Activated T-helper 2 cell treated with anti-CD3 and anti-CD28 coated beads, Interferon-gamma antibody, Interleukin-2, Interleukin-4, amounts not matched to agents 10 μg/mL and 5 μg/mL and 100 μg/mL, durations not matched to agents 14 hours and 24 hours and 36 hours (primary cell): ENCODE measurements at regions of chr19 and their contacts with region 1.

Region 1: DNA sequence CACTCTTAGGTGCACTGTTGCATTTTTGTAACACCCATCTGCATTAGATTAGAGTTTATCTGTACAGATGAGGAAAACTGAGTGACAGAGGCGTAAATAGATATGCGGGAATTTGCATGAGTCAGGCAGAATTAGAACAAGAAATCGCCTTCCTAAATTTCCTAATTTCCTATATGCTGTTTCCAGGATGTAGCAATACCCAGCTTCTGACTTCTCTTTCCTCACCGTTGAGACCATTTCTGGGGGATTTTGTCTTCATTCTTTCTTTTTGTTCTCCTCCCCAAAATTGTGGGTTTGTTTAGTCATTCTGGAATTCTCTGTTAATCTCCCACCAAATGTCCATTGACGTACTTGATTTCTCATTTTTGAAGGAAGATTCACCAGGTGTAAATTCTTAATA is 10.6 kb upstream of the ZNF792 start:
- DNase-seq: no peak
- H3K4me3 Mint-ChIP-seq: no peak overlapping the region
- H3K27ac Mint-ChIP-seq: no peak overlapping the region
- H3K4me1 Mint-ChIP-seq: peaks cover 16% of the 10 kb centered on the region
- H3K27me3 Mint-ChIP-seq: no peaks in the 10 kb centered on the region

Region 2: DNA sequence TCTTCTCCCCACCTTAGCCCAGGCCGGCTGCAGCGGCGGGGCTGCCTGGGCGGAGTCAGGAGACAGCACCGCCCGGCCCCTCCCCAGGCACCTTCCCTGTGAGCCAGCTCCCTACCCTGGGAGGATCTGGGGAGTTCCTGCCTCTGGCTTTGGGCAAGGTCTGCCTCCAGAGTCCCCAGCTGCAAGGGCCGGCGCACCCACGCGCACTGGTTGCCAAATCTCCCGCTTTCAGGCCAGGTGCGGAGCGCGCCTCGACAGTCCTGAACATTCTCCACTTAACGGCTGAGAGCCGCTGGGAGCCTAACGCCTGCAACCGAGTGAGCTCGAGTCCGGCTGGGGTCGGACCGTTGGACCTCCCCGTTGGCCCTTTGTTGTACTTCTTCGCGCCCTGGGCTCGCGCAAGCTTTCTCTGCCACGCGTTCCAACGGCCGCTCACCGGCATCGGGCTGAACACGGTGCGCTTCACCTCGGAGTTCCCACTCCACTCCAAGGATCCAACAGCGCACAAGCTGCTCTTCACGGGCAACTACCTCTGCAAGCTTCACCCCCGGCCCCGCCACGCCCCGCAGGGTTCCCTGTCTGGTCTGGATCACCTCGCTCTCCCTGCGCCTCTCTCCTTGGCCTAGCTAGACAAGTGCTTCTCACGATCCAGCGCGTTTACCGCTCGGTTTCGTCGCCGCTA is 69.7 kb before region 1 on chr19:
- intact Hi-C with region 1: no loop called
- DNase-seq: no peak
- H3K4me3 Mint-ChIP-seq: no peak overlapping the region
- H3K27ac Mint-ChIP-seq: no peak overlapping the region
- H3K4me1 Mint-ChIP-seq: no peaks in the 10 kb centered on the region
- H3K27me3 Mint-ChIP-seq: peaks cover 29% of the 10 kb centered on the region

Region 3: DNA sequence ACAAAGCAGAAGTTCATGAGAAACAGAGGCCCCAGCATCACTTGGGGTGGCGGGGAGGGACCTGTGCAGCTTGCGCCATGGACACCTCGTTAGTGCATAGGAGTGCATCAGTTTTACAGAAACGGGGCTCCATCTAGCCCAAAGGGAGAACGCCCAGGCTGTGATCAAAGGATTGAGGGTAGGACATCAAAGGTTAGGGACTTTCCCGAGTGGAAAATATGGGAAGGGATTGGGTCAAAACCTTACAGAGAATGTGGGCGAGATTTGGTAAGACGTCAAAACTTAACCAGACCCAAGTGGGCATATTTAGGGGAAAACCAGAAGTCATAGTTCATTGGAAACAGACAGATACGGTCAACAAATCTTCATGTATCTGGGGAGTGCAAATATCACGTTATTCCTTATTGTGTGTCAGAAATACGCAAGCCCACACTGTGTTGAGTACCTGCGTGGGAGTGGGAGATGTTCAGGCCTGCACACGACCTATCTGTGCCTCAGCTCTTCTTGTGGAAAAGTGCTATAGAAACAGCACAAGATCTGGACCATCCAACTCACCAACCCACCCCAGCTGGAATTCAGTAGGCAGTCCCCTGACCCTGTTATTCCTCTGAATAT is 16.0 kb after region 1 on chr19:
- intact Hi-C with region 1: loop called (anchors 2 kb)
- DNase-seq: no peak
- H3K4me3 Mint-ChIP-seq: no peak overlapping the region
- H3K27ac Mint-ChIP-seq: peak overlapping the region; percentile 96
- H3K4me1 Mint-ChIP-seq: peaks cover 31% of the 10 kb centered on the region
- H3K27me3 Mint-ChIP-seq: no peaks in the 10 kb centered on the region

Region 4: GRCh38 chr19:34999498-35000341 is 25.1 kb after region 1 on chr19 and contains the start of gene GRAMD1A:
- intact Hi-C with region 1: loop called (anchors 1 kb)
- DNase-seq: peak; percentile 70
- H3K4me3 Mint-ChIP-seq: peak within 1 kb of the TSS; percentile 99
- H3K27ac Mint-ChIP-seq: peak within 1 kb of the TSS; percentile 98
- H3K4me1 Mint-ChIP-seq: peaks cover 47% of the 10 kb centered on the region
- H3K27me3 Mint-ChIP-seq: no peaks in the 10 kb centered on the region
- total RNA-seq, gene GRAMD1A: 260 TPM in 2 replicates

Region 5: DNA sequence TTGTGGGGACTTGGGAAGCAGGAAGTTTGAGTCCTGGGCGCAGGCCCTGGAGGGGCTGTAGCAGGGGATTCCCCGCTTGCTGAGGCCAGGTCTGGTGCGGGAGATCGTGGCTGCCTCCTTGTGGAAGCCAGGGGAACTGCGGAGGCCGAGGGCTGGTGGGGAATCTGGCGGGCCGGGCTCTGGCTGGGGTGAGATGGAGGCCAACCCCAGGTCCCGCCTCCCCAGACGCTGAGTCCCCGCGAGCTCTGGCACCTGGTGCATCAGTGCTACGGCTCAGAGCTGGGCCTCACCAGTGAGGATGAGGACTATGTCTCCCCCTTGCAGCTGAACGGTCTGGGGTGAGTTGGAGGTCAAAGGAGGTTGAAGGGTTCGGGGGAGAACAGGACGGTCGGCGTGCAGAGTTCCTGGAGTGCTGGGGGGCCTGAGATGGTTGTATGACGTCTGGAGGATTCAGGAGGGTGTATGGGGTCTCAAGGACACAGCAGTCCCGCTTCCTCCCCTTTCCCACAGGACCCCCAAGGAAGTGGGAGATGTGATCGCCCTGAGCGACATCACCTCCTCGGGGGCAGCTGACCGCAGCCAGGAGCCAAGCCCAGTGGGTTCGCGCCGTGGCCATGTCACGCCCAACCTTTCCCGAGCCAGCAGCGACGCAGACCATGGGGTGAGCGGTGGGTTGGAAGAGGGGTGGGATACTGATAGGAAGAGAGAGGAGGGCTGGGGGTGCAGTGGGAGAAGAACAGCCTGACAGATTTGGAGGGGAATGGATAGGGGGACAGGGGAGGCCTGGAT is 38.6 kb after region 1 on chr19:
- intact Hi-C with region 1: loop called (anchors 1 kb)
- DNase-seq: peak; percentile 70
- H3K4me3 Mint-ChIP-seq: no peak overlapping the region
- H3K27ac Mint-ChIP-seq: peak overlapping the region; percentile 73
- H3K4me1 Mint-ChIP-seq: peaks cover 24% of the 10 kb centered on the region
- H3K27me3 Mint-ChIP-seq: no peaks in the 10 kb centered on the region